ENCODE measurements at regions of chr7 and their contacts with region 1.

Region 1: GRCh38 chr7:21253740-21254687 is 173.9 kb upstream of the SP4 start:
- DNase-seq: peak in 4 of 5 donors; percentile 9 to 31 (median 26)
- H3K4me3 ChIP-seq: no peak overlapping the region
- H3K4me3 Mint-ChIP-seq: peak overlapping the region in 6 of 8 donors; percentile 23 to 58 (median 43)
- H3K27ac ChIP-seq: no peak overlapping the region
- H3K27ac Mint-ChIP-seq: no peak overlapping the region
- H3K4me1 ChIP-seq: peaks cover 5% of the 10 kb centered on the region
- H3K4me1 Mint-ChIP-seq: peaks cover 0 to 2% (median 0%) of the 10 kb centered on the region in 4 donors
- H3K27me3 ChIP-seq: peaks cover 6% of the 10 kb centered on the region
- H3K27me3 Mint-ChIP-seq: peaks cover 36 to 54% of the 10 kb centered on the region in 2 donors

Region 2: GRCh38 chr7:19713676-19714075 is 1540.3 kb before region 1 on chr7:
- CTCF ChIA-PET with region 1: no interaction called
- POLR2A ChIA-PET with region 1: no interaction called
- intact Hi-C with region 1: loop called (anchors 10 kb)
- DNase-seq: peak; percentile 39 to 59 (median 49)
- H3K4me3 ChIP-seq: no peak overlapping the region
- H3K4me3 Mint-ChIP-seq: no peak overlapping the region
- H3K27ac ChIP-seq: no peak overlapping the region
- H3K27ac Mint-ChIP-seq: peak overlapping the region in 1 of 7 donors; percentile 54
- H3K4me1 ChIP-seq: peaks cover 9% of the 10 kb centered on the region
- H3K4me1 Mint-ChIP-seq: peaks cover 10 to 16% (median 14%) of the 10 kb centered on the region in 4 donors
- H3K27me3 ChIP-seq: no peaks in the 10 kb centered on the region
- H3K27me3 Mint-ChIP-seq: peaks cover 0 to 9% of the 10 kb centered on the region in 2 donors

Region 3: GRCh38 chr7:20146451-20146850 is 1107.6 kb before region 1 on chr7:
- CTCF ChIA-PET with region 1: no interaction called
- POLR2A ChIA-PET with region 1: no interaction called
- intact Hi-C with region 1: no loop called
- DNase-seq: no peak
- H3K4me3 ChIP-seq: no peak overlapping the region
- H3K4me3 Mint-ChIP-seq: no peak overlapping the region
- H3K27ac ChIP-seq: no peak overlapping the region
- H3K27ac Mint-ChIP-seq: no peak overlapping the region
- H3K4me1 ChIP-seq: no peaks in the 10 kb centered on the region
- H3K4me1 Mint-ChIP-seq: peaks cover 0 to 2% (median 0%) of the 10 kb centered on the region in 4 donors
- H3K27me3 ChIP-seq: no peaks in the 10 kb centered on the region
- H3K27me3 Mint-ChIP-seq: no peaks in the 10 kb centered on the region

Region 4: DNA sequence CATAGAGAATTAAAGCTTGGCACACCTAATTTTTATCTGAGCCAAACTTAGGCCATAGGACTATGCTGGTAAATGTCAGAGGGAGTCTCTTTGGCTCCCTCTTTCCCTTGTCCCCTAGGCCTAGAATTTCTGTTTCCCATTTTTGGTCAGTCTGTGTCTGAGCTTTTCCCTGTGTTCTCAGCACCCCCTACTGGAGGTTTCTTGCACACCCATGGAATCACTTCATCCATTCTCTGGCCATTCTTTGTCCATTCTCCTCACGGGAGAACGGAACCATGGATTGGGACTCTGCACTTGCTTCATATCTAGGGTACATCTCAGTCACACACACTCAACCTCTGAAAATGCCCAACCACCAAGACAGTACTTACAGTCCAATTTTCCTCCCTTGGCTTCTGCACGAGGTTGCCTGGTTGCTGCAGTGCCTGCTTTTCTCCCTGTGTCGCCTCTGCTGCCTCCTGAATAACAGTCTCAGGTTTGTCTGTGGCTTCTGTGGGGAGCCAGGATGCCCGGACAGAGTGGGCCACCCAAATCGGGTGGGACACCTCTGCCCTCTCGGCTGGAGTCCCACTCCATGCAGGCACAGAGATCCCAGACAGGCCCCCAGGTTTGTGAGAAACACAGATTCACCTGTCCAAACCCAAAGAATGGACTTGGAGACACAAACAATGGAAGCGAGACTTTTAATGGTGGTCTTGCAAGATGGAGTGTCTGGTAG is 253.8 kb after region 1 on chr7:
- CTCF ChIA-PET with region 1: interaction called, 19 read pairs
- POLR2A ChIA-PET with region 1: no interaction called
- intact Hi-C with region 1: loop called (anchors 1 kb)
- DNase-seq: peak in 3 of 5 donors; percentile 12 to 19 (median 17)
- H3K4me3 ChIP-seq: no peak overlapping the region
- H3K4me3 Mint-ChIP-seq: no peak overlapping the region
- H3K27ac ChIP-seq: no peak overlapping the region
- H3K27ac Mint-ChIP-seq: peak overlapping the region in 2 of 7 donors; percentile 13 to 19
- H3K4me1 ChIP-seq: no peaks in the 10 kb centered on the region
- H3K4me1 Mint-ChIP-seq: peaks cover 0 to 6% (median 2%) of the 10 kb centered on the region in 4 donors
- H3K27me3 ChIP-seq: no peaks in the 10 kb centered on the region
- H3K27me3 Mint-ChIP-seq: no peaks in the 10 kb centered on the region

Region 5: GRCh38 chr7:21568762-21569161 is 314.7 kb after region 1 on chr7:
- CTCF ChIA-PET with region 1: interaction called, 3 read pairs
- POLR2A ChIA-PET with region 1: no interaction called
- intact Hi-C with region 1: loop called (anchors 1 kb)
- DNase-seq: peak in 2 of 5 donors; percentile 2 to 5
- H3K4me3 ChIP-seq: no peak overlapping the region
- H3K4me3 Mint-ChIP-seq: no peak overlapping the region
- H3K27ac ChIP-seq: no peak overlapping the region
- H3K27ac Mint-ChIP-seq: no peak overlapping the region
- H3K4me1 ChIP-seq: no peaks in the 10 kb centered on the region
- H3K4me1 Mint-ChIP-seq: no peaks in the 10 kb centered on the region
- H3K27me3 ChIP-seq: no peaks in the 10 kb centered on the region
- H3K27me3 Mint-ChIP-seq: peaks cover 0 to 11% of the 10 kb centered on the region in 2 donors

Region 6: DNA sequence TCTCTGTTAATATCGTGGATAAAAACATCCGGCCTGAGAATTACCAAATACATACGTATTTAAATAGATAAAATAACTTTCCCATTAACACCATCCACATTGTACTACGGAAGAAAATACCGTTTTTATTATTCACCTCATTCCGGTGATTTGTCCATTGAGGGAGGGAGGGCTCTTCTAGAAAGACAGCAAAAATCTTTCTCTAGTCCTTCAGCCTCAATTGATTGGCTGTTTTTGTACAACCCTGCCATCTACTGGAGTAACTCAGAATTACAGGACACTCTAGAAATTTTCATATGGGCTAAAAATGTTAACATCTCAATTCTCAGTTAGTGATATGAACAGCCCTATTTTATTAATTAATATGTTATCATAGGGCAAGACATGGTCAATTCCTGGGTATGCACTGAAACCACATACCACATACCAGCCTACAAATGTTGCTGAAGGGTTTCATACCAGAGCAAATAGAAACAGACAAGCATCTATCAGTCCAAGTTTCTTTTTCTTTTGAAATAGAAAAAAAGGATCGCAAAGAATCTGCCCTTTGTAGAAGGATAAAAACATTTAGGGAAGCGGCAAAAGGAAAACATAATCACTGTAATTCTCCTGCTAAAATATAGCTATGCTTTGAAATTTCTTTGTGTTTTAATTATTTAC is 747.5 kb after region 1 on chr7:
- CTCF ChIA-PET with region 1: interaction called, 8 read pairs
- POLR2A ChIA-PET with region 1: no interaction called
- intact Hi-C with region 1: loop called (anchors 1 kb)
- DNase-seq: peak; percentile 27 to 56 (median 47)
- H3K4me3 ChIP-seq: no peak overlapping the region
- H3K4me3 Mint-ChIP-seq: peak overlapping the region in 3 of 8 donors; percentile 33 to 63 (median 60)
- H3K27ac ChIP-seq: no peak overlapping the region
- H3K27ac Mint-ChIP-seq: peak overlapping the region in 1 of 7 donors; percentile 19
- H3K4me1 ChIP-seq: no peaks in the 10 kb centered on the region
- H3K4me1 Mint-ChIP-seq: peaks cover 0 to 5% (median 2%) of the 10 kb centered on the region in 4 donors
- H3K27me3 ChIP-seq: no peaks in the 10 kb centered on the region
- H3K27me3 Mint-ChIP-seq: peaks cover 2 to 6% of the 10 kb centered on the region in 2 donors

Region 7: DNA sequence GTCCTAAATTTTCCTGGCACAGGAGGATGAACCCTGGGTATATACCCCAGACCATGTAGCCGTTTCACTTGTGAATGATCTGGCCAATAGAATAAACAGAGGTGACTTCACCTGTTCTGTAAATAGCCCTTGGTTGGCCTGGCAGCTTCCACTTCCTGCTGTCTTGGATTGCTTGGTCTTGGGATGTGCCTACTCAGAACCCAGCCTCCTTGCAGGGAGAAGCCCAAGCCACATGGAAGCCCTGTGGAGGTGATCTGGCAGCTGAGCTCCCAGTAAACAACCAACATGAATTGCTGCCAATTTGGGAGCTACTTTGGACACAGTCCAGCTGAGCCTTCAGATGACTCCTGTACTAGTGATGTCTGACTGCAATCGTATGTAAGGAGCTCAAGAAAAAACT is 1107.8 kb after region 1 on chr7:
- CTCF ChIA-PET with region 1: no interaction called
- POLR2A ChIA-PET with region 1: no interaction called
- intact Hi-C with region 1: no loop called
- DNase-seq: no peak
- H3K4me3 ChIP-seq: no peak overlapping the region
- H3K4me3 Mint-ChIP-seq: no peak overlapping the region
- H3K27ac ChIP-seq: no peak overlapping the region
- H3K27ac Mint-ChIP-seq: no peak overlapping the region
- H3K4me1 ChIP-seq: no peaks in the 10 kb centered on the region
- H3K4me1 Mint-ChIP-seq: peaks cover 2 to 8% (median 4%) of the 10 kb centered on the region in 4 donors
- H3K27me3 ChIP-seq: no peaks in the 10 kb centered on the region
- H3K27me3 Mint-ChIP-seq: peaks cover 11 to 18% of the 10 kb centered on the region in 2 donors

Measured in CD4-positive, alpha-beta memory T cell (primary cell).